Mammary epithelial cell (primary cell): ENCODE measurements at regions of chr12 and their contacts with region 1.

Region 1: DNA sequence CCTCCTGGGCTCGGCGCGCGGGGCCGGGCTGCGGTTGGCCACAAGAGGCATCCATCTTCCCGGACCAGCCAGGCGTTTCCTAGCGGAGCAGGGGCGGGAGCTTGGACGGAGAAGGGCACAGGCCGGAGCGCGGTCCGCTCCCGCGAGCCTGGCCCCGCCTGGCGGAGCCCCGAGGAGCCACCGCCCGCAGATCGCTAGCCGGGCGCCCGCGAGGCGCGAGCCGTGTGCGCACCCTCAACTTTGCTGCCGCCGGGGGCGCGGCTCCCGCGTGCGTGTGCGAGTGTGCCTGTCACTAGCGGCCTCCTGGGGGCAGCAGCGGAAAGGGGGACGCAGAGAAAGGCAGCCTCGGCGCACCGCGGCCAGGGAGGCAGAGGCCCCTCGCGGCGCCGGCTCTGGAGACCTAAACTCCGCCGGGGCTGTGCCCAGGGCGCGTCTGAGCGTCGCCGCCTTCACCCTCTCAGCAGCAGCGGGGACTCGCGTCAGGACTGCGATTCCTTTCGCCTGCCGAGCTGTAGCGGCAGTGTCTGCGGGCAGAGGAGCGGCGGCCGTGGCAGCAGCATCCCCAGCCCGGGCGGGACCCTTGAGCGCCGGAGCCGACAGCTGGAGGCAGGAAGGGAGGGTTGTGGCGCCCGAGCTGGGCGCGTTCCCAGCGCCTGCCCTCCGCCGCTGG is 644 bp upstream of the SRGAP1 start:
- DNase-seq: peak; percentile 89
- H3K4me3 ChIP-seq: peak overlapping the region; percentile 70 to 83 (median 80)
- H3K27ac ChIP-seq: peak overlapping the region; percentile 62
- H3K4me1 ChIP-seq: peaks cover 12% of the 10 kb centered on the region
- H3K27me3 ChIP-seq: no peaks in the 10 kb centered on the region
- CTCF ChIP-seq: peak; percentile 70 to 94

Region 2: GRCh38 chr12:63978519-63978918 is 134.7 kb after region 1 on chr12:
- CTCF ChIA-PET with region 1: no interaction called
- dilution Hi-C with region 1: no loop called
- in situ Hi-C with region 1: no loop called
- intact Hi-C with region 1: loop called (anchors 1 kb)
- DNase-seq: peak; percentile 87
- H3K4me3 ChIP-seq: no peak overlapping the region
- H3K27ac ChIP-seq: peak overlapping the region; percentile 15
- H3K4me1 ChIP-seq: peaks cover 11% of the 10 kb centered on the region
- H3K27me3 ChIP-seq: no peaks in the 10 kb centered on the region
- CTCF ChIP-seq: no peak

Region 3: DNA sequence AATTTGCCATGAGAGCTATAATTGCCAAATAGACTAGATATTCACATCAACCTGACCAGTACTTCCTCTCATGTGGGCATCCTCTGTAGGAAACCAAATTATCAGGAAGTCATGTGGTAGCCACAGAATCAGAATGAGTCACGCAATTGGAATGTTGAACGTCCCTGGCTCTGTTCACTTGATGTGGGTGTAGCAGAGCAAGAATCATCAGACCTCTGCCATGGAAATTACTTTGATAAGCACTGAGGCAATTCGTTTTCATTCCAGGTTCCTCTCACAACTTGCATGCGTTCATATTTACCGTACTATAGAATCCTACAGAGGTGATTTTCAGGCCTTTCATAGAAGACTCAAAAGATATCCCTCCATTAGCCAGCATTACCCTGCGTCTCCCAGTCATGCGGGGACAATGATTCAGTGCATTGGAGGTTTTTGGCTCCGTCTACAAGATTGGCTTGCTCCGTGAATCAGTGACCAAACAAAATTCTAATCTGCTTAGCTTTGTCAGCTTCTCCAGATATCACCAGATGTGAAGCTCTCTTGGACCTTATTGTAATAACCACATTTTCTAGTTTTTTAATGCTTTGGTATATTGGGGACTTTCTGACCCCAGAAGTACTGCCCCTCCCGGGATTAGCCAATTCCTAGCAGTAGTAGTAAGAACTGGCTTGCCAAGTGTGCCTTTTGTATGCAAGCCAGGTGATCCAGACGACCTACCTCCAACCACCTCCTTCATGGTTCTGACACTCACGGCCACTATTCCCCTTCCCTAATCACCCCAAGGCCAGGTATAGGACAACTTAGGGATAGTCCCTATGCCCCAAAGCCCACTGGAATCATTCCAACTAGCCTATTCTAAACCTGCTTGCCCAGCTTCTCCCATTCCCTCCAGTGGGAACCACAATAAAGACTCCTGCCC is 244.8 kb after region 1 on chr12:
- CTCF ChIA-PET with region 1: no interaction called
- dilution Hi-C with region 1: no loop called
- in situ Hi-C with region 1: loop called in 1 of 2 experiments (anchors 25 kb)
- intact Hi-C with region 1: loop called (anchors 5 kb)
- DNase-seq: peak; percentile 93
- H3K4me3 ChIP-seq: peak overlapping the region in 2 of 3 experiments; percentile 2 to 19
- H3K27ac ChIP-seq: peak overlapping the region; percentile 79
- H3K4me1 ChIP-seq: peaks cover 30% of the 10 kb centered on the region
- H3K27me3 ChIP-seq: no peaks in the 10 kb centered on the region
- CTCF ChIP-seq: no peak

Region 4: GRCh38 chr12:64120571-64120970 is 276.7 kb after region 1 on chr12:
- CTCF ChIA-PET with region 1: interaction called, 12 read pairs
- dilution Hi-C with region 1: no loop called
- in situ Hi-C with region 1: no loop called
- intact Hi-C with region 1: loop called (anchors 5 kb)
- DNase-seq: peak; percentile 74
- H3K4me3 ChIP-seq: no peak overlapping the region
- H3K27ac ChIP-seq: peak overlapping the region; percentile 0
- H3K4me1 ChIP-seq: peaks cover 16% of the 10 kb centered on the region
- H3K27me3 ChIP-seq: no peaks in the 10 kb centered on the region
- CTCF ChIP-seq: no peak

Region 5: DNA sequence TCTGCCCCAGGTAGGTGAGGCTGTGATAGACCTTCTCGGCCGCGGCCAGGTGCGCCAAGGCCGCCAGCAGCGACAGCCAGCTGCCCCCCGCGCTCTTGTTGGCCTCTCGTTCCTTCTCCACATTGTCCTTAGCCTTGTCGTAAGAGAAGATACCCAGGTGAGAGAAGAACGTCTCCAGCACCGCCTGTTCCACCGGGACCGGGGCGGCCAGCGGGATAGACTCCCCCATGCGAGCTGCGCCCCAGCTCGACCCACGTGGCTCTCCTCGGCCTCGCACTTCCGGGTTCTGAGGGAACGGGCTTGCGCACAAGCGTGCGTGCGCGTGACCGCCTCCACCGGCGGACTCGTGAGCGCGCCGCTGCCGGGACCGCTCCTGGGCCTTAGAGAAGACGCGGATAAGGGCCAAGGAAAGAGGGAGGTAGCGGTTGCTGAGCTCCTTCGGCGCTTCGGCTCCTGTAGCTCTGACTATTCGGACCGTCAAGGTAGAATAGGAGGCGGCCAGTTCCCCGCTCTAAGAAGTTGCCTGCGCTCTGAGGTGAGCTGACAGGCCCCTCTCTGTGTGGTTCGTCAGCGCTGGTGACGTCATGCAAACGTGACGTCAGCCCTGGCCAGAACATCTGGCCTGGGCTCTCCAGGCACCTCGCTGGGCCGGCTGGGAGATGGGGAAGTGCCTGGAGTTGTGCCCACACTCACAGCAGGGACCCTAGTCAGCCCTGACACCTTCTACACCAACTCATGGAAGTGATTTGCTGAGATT is 378.3 kb after region 1 on chr12 and contains the start of gene KICS2:
- CTCF ChIA-PET with region 1: no interaction called
- dilution Hi-C with region 1: no loop called
- in situ Hi-C with region 1: no loop called
- intact Hi-C with region 1: loop called (anchors 1 kb)
- DNase-seq: peak; percentile 93
- H3K4me3 ChIP-seq: peak within 1 kb of the TSS; percentile 79 to 94 (median 85)
- H3K27ac ChIP-seq: peak within 1 kb of the TSS; percentile 91
- H3K4me1 ChIP-seq: peaks cover 11% of the 10 kb centered on the region
- H3K27me3 ChIP-seq: no peaks in the 10 kb centered on the region
- CTCF ChIP-seq: no peak
- total RNA-seq, gene KICS2: 10.7 to 14.5 TPM

Region 6: GRCh38 chr12:64256166-64256800 is 412.4 kb after region 1 on chr12:
- CTCF ChIA-PET with region 1: no interaction called
- dilution Hi-C with region 1: no loop called
- in situ Hi-C with region 1: loop called in 1 of 2 experiments (anchors 5 kb)
- intact Hi-C with region 1: loop called (anchors 1 kb)
- DNase-seq: peak; percentile 32
- H3K4me3 ChIP-seq: no peak overlapping the region
- H3K27ac ChIP-seq: no peak overlapping the region
- H3K4me1 ChIP-seq: no peaks in the 10 kb centered on the region
- H3K27me3 ChIP-seq: no peaks in the 10 kb centered on the region
- CTCF ChIP-seq: peak; percentile 47 to 65